ENCODE measurements at regions of chr1 and their contacts with region 1.

Region 1: GRCh38 chr1:38586993-38587646 is 272.5 kb downstream of the RRAGC start:
- DNase-seq: peak in 2 of 5 donors; percentile 34 to 71
- ATAC-seq: peak; percentile 26 to 74 (median 58)
- H3K4me3 ChIP-seq: no peak overlapping the region
- H3K27ac ChIP-seq: no peak overlapping the region
- H3K4me1 ChIP-seq: peaks cover 0 to 5% (median 0%) of the 10 kb centered on the region in 12 donors
- H3K27me3 ChIP-seq: peaks cover 0 to 11% (median 0%) of the 10 kb centered on the region in 9 donors
- CTCF ChIP-seq: peak; percentile 62 to 87 (median 71)
- POLR2A ChIP-seq: no peak

Region 2: DNA sequence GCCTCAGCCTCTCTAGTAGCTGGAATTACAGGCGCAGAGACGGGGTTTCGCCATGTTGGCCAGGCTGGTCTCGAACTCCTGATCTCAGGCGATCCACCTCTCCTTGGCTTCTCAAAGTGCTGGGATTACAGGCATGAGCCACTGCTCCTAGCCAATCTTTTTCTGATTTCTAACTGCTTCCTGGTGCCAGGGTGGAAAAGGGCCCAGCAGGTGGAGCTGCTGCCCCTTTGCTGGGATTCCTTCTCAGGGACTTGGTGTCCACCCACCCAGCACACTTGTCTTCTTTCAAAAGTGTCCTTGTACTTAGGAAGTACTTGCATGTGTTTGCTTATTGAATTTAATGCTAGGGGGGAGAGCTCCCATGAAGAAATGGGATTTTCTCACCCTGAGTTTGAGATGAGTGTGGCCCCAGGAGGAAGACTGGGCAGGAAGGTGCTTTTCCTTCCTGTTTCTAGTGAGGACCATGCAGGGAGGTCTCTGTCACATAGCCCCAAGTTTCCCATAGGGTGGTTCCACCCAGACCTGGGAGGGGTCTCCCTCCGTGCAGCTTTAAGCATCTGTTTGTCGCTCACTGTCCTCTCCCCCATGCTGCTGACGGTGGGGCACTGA is 560.4 kb before region 1 on chr1:
- intact Hi-C with region 1: loop called in 3 of 10 experiments (anchors 5 to 10 kb)
- DNase-seq: no peak
- ATAC-seq: no peak
- H3K4me3 ChIP-seq: no peak overlapping the region
- H3K27ac ChIP-seq: no peak overlapping the region
- H3K4me1 ChIP-seq: peaks cover 0 to 40% (median 21%) of the 10 kb centered on the region in 12 donors
- H3K27me3 ChIP-seq: no peaks in the 10 kb centered on the region
- CTCF ChIP-seq: peak; percentile 37 to 63 (median 51)
- POLR2A ChIP-seq: no peak

Region 3: DNA sequence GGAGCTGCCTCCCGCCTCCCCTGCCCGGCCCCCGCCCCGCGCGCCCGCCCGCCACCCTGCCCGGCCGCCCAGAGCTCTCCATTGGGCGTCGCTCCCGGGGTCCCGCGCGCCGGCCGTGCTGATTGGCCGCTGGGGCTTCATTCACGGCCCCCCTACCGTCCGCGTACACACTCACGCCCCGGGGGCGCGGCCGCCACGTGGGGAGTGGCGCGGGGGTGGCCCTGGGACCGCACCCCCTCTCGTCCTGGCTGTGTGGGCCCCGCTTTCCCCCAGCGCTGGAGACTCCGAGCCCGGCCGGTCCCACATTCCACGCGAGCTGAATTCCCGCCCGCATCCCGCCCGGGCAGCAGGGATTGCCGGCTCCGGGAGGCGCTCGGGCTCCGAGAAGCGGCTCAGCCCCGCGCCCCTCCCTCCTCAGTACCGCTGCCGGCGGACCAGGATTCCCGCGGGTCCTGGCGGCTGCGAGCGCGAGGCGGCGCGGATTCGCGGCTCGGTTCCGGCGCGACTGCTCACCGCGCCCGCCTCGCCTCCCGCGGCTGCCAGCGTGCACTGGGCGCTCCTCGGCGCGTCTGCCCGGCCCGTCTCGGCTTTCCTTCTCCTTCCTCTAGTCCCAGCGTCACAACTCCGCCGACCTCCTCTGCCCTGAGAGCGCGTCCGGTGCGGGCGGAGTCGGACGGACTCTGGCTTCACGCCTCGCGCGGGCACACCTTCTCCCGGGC is 540.1 kb before region 1 on chr1:
- intact Hi-C with region 1: loop called in 4 of 10 experiments (anchors 5 to 10 kb)
- DNase-seq: peak; percentile 86 to 94 (median 91)
- ATAC-seq: peak; percentile 93 to 97 (median 96)
- H3K4me3 ChIP-seq: peak overlapping the region; percentile 30 to 82 (median 66)
- H3K27ac ChIP-seq: peak overlapping the region in 4 of 12 donors; percentile 13 to 72 (median 55)
- H3K4me1 ChIP-seq: peaks cover 3 to 38% (median 19%) of the 10 kb centered on the region in 12 donors
- H3K27me3 ChIP-seq: peaks cover 31 to 65% (median 37%) of the 10 kb centered on the region in 9 donors
- CTCF ChIP-seq: peak in 5 of 12 donors; percentile 13 to 35 (median 23)
- POLR2A ChIP-seq: no peak

Region 4: GRCh38 chr1:38052750-38053410 is 534.2 kb before region 1 on chr1:
- intact Hi-C with region 1: loop called in 4 of 10 experiments (anchors 5 to 10 kb)
- DNase-seq: no peak
- ATAC-seq: no peak
- H3K4me3 ChIP-seq: no peak overlapping the region
- H3K27ac ChIP-seq: no peak overlapping the region
- H3K4me1 ChIP-seq: peaks cover 0 to 2% (median 0%) of the 10 kb centered on the region in 12 donors
- H3K27me3 ChIP-seq: peaks cover 0 to 31% (median 3%) of the 10 kb centered on the region in 9 donors
- CTCF ChIP-seq: no peak
- POLR2A ChIP-seq: no peak

Region 5: GRCh38 chr1:38474738-38475623 is 112.1 kb before region 1 on chr1:
- intact Hi-C with region 1: no loop called
- DNase-seq: no peak
- ATAC-seq: no peak
- H3K4me3 ChIP-seq: no peak overlapping the region
- H3K27ac ChIP-seq: no peak overlapping the region
- H3K4me1 ChIP-seq: peaks cover 0 to 7% (median 0%) of the 10 kb centered on the region in 12 donors
- H3K27me3 ChIP-seq: peaks cover 0 to 80% (median 34%) of the 10 kb centered on the region in 9 donors
- CTCF ChIP-seq: no peak
- POLR2A ChIP-seq: no peak

Region 6: GRCh38 chr1:38680801-38681510 is 93.8 kb after region 1 on chr1:
- intact Hi-C with region 1: no loop called
- DNase-seq: no peak
- ATAC-seq: no peak
- H3K4me3 ChIP-seq: no peak overlapping the region
- H3K27ac ChIP-seq: no peak overlapping the region
- H3K4me1 ChIP-seq: no peaks in the 10 kb centered on the region
- H3K27me3 ChIP-seq: peaks cover 0 to 19% (median 4%) of the 10 kb centered on the region in 9 donors
- CTCF ChIP-seq: no peak
- POLR2A ChIP-seq: no peak

Measured in heart left ventricle (tissue), 16 donors.